PC-9 (cell line): ENCODE measurements at regions of chr4 and their contacts with region 1.

Region 1: DNA sequence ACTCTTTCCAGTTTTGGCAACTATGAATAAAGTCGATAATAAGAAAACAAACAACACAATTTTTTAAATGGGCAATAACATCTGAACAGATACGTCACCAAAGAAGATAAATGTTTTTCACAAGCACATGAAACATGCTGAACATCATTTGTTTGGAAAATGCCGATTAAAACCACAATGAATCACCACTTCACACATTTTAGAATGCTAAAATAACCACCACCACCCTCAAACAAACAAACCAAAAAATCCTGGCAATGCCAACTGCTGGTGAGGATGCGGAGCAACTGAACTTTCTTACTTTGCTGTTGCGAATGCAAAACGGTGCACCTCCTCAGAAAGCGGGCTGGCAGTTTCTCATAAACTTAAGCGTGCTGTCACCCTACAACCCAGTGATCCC is 115.9 kb downstream of the NSUN7 start:
- DNase-seq: no peak
- H3K4me3 ChIP-seq: no peak overlapping the region
- H3K27ac ChIP-seq: no peak overlapping the region
- H3K4me1 ChIP-seq: no peaks in the 10 kb centered on the region
- H3K27me3 ChIP-seq: no peaks in the 10 kb centered on the region
- CTCF ChIP-seq: no peak

Region 2: GRCh38 chr4:39237179-39237578 is 1628.5 kb before region 1 on chr4:
- CTCF ChIA-PET with region 1: no interaction called
- POLR2A ChIA-PET with region 1: no interaction called
- intact Hi-C with region 1: no loop called
- DNase-seq: no peak
- H3K4me3 ChIP-seq: no peak overlapping the region
- H3K27ac ChIP-seq: no peak overlapping the region
- H3K4me1 ChIP-seq: no peaks in the 10 kb centered on the region
- H3K27me3 ChIP-seq: no peaks in the 10 kb centered on the region
- CTCF ChIP-seq: no peak

Region 3: DNA sequence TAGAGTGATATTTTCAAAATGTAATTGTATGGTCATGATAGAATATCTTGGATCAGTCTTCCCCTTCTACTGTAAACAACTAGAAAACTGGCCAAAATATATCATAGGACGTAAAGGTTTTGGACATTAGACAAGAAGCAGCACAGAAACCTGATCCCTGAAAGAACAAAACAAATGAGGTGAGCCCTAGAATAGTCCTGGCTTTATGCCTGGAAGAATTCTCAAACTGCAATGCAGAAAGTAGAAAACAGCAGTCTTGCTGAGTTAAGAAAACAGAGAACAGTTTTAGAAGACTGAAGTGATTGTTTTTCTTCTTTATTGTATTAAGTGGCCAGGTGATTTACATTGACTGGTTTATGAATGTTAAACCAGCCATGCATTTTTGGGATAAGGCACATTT is 96.4 kb before region 1 on chr4:
- CTCF ChIA-PET with region 1: no interaction called
- POLR2A ChIA-PET with region 1: interaction called, 31 read pairs
- intact Hi-C with region 1: no loop called
- DNase-seq: no peak
- H3K4me3 ChIP-seq: no peak overlapping the region
- H3K27ac ChIP-seq: no peak overlapping the region
- H3K4me1 ChIP-seq: no peaks in the 10 kb centered on the region
- H3K27me3 ChIP-seq: no peaks in the 10 kb centered on the region
- CTCF ChIP-seq: no peak

Region 4: DNA sequence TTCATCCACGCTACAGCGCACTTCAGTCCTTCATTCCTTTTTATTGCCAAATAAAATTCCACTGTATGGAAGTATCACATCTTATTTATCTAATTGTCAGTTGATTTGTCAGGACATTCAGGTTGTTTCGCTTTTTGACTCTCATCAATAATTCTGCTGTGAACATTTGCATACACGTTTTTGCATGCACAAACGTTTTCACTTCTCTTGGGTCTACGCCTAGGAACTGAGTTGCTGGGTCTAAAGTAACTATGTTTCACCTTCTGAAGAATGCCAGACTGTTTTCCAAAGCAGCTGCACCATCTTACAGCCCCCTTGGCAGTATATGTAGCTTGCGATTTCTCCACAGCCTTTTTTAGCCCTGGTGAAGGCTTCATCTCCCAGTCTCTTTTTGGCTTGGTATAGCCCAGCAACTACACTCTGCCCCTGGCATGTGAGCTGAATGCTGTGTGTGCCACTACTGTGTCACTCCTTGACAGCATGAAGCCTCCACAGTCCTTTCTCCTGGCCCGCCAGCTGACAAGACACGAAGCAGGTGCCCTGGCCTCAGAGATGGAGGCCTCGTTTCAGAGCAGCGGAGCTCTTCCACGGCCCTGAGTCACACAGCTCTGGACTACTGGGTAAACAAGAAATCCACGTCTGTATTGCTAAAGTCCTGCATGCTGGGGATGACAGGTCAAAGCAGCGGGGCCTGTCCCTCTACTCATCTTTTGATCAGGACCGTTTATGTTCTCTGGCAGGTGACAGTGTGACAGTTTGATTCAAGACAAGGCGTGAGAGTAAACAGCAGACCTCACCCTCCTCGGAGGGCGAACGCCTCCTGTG is 40.5 kb before region 1 on chr4:
- CTCF ChIA-PET with region 1: no interaction called
- POLR2A ChIA-PET with region 1: interaction called, 28 read pairs
- intact Hi-C with region 1: no loop called
- DNase-seq: no peak
- H3K4me3 ChIP-seq: no peak overlapping the region
- H3K27ac ChIP-seq: no peak overlapping the region
- H3K4me1 ChIP-seq: no peaks in the 10 kb centered on the region
- H3K27me3 ChIP-seq: no peaks in the 10 kb centered on the region
- CTCF ChIP-seq: no peak